ENCODE measurements at regions of chr18 and their contacts with region 1.

Region 1: GRCh38 chr18:11714244-11714918 is 25.3 kb downstream of the GNAL start:
- DNase-seq: peak; percentile 9
- H3K4me3 ChIP-seq: peak overlapping the region; percentile 2 to 31 (median 12)
- H3K27ac ChIP-seq: peak overlapping the region; percentile 29
- H3K4me1 ChIP-seq: no peaks in the 10 kb centered on the region
- H3K27me3 ChIP-seq: no peaks in the 10 kb centered on the region
- CTCF ChIP-seq: no peak

Region 2: DNA sequence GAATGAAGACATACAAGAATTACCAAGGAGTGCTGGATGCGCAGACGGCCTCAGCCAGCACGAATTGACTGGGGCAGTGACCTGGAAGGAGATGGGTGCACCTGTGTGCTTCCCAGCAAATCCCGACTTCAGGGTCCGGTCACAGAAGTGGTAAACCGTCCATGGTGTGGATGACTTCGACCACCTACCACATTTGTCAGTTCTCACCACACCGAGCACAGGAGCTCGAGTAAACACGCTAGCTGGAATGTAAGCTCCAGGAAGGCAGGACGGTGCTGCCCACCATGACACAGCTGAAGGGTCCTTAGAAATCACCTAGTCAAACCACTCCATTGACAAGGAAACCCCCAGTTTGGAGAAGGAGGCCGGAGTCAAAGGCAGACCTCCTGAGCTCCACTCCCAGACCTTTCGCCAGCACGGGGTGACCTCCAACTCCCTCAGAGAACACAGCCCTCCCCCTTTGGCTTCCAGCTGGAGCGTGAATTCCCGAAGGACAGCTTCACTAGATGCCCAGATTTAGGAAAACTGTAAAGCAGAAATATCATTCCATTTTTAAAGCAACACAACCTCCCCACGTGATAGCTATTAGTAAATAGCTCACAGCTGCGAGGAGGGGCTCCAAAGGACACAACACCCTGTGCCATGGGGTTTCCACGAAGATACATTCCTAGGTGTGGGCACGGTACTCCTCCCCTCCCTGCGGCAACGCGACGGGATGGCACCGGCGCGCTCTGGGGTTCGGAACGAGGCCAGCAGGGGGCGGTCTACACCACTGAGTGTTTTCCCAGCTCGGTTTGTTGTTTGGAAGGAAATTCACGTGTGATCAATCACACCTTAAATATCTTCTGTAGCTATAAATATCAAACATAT is 59.4 kb before region 1 on chr18:
- CTCF ChIA-PET with region 1: no interaction called
- dilution Hi-C with region 1: no loop called
- in situ Hi-C with region 1: no loop called
- intact Hi-C with region 1: no loop called
- DNase-seq: peak; percentile 54
- H3K4me3 ChIP-seq: no peak overlapping the region
- H3K27ac ChIP-seq: no peak overlapping the region
- H3K4me1 ChIP-seq: peaks cover 31% of the 10 kb centered on the region
- H3K27me3 ChIP-seq: no peaks in the 10 kb centered on the region
- CTCF ChIP-seq: peak; percentile 94 to 95

Region 3: DNA sequence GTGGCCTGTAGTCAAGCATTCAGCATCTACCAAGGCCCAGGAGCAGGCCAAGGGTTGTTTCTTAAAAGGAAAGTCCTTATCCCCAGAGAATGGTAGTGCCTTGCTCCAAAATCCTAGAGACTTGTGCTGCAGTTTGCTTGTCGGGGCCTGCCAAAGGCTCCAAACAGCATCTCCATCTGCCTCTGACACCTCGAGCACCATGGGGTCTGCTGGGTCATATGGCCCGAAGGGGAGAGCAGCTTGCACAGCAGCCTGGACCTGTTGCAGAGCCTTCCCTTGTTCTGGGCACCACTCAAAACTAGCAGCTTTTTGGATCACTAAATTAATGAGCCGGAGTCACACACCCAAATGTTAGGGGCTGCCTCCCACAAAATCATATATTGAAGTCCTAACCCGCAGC is 10.4 kb after region 1 on chr18:
- CTCF ChIA-PET with region 1: no interaction called
- dilution Hi-C with region 1: no loop called
- in situ Hi-C with region 1: no loop called
- intact Hi-C with region 1: loop called (anchors 1 kb)
- DNase-seq: no peak
- H3K4me3 ChIP-seq: no peak overlapping the region
- H3K27ac ChIP-seq: no peak overlapping the region
- H3K4me1 ChIP-seq: peaks cover 21% of the 10 kb centered on the region
- H3K27me3 ChIP-seq: no peaks in the 10 kb centered on the region
- CTCF ChIP-seq: no peak

Measured in mammary epithelial cell (primary cell).